ENCODE measurements at regions of chr5 and their contacts with region 1.

Region 1: DNA sequence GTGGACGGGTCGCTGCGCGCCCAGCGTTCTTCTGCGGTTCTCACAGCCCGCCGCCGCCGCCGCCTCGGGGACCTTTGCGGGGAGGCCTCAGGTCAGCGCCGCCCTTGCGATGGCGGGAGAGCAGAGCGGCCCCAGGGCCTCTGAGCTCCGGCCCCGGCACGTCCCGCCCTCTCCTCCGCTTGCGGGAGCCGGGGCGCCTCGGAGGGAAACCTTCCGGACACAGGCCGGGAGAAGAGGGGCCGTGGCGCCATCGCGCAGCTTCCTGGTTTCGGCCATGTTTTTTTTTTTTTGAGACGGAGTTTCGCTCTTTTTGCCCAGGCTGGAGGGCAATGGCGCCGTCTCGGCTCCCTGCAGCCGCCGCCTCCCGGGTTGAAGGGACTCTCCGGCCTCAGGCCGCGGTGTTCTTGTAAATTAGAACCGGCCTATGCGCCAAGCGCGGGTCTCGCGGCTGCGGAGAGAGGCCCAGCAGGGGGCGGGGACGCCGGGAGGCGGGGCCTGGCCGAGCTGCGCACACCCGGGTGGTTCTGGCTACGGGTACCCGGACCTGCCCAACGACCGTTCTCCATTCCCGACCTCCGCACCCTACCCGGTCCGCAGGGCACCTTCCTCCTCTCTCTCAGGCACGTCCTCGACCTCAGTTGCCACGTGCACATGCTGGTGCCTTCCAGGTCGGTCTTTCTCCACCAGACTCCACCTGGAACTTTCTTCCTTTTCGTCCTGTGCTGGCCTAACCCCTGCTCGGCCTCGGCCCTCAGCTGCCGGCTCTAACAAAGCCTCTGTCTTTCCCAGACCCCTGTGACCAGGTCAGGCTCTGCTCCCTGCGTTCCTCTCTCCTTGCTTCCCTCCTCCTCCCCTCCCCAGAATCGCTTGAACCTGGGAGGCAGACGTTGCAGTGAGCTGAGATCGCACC is 28.8 kb upstream of the MGAT1 start:
- DNase-seq: peak; percentile 67 to 81 (median 72)
- H3K4me3 ChIP-seq: peak overlapping the region; percentile 59 to 83
- H3K4me3 Mint-ChIP-seq: peak overlapping the region; percentile 94 to 99 (median 98)
- H3K27ac ChIP-seq: peak overlapping the region; percentile 94
- H3K27ac Mint-ChIP-seq: peak overlapping the region; percentile 97 to 99 (median 98)
- H3K4me1 ChIP-seq: peaks cover 51% of the 10 kb centered on the region
- H3K4me1 Mint-ChIP-seq: peaks cover 33 to 66% (median 50%) of the 10 kb centered on the region in 4 donors
- H3K27me3 ChIP-seq: no peaks in the 10 kb centered on the region
- H3K27me3 Mint-ChIP-seq: no peaks in the 10 kb centered on the region

Region 2: GRCh38 chr5:180796964-180797849 is 34.2 kb before region 1 on chr5:
- CTCF ChIA-PET with region 1: interaction called, 109 read pairs
- POLR2A ChIA-PET with region 1: interaction called, 236 read pairs
- intact Hi-C with region 1: loop called (anchors 1 kb)
- DNase-seq: no peak
- H3K4me3 ChIP-seq: no peak overlapping the region
- H3K4me3 Mint-ChIP-seq: peak overlapping the region in 7 of 8 donors; percentile 26 to 97 (median 65)
- H3K27ac ChIP-seq: no peak overlapping the region
- H3K27ac Mint-ChIP-seq: peak overlapping the region; percentile 48 to 91 (median 69)
- H3K4me1 ChIP-seq: peaks cover 83% of the 10 kb centered on the region
- H3K4me1 Mint-ChIP-seq: peaks cover 70 to 90% (median 81%) of the 10 kb centered on the region in 4 donors
- H3K27me3 ChIP-seq: no peaks in the 10 kb centered on the region
- H3K27me3 Mint-ChIP-seq: no peaks in the 10 kb centered on the region

Region 3: GRCh38 chr5:180810210-180810958 is 21.0 kb before region 1 on chr5:
- CTCF ChIA-PET with region 1: interaction called, 109 read pairs
- POLR2A ChIA-PET with region 1: interaction called, 271 read pairs
- intact Hi-C with region 1: loop called (anchors 1 kb)
- DNase-seq: peak; percentile 95 to 99 (median 98)
- H3K4me3 ChIP-seq: peak overlapping the region; percentile 60 to 95
- H3K4me3 Mint-ChIP-seq: peak overlapping the region; percentile 83 to 99 (median 90)
- H3K27ac ChIP-seq: peak overlapping the region; percentile 93
- H3K27ac Mint-ChIP-seq: peak overlapping the region; percentile 92 to 100 (median 99)
- H3K4me1 ChIP-seq: peaks cover 61% of the 10 kb centered on the region
- H3K4me1 Mint-ChIP-seq: peaks cover 53 to 87% (median 69%) of the 10 kb centered on the region in 4 donors
- H3K27me3 ChIP-seq: no peaks in the 10 kb centered on the region
- H3K27me3 Mint-ChIP-seq: no peaks in the 10 kb centered on the region

Region 4: DNA sequence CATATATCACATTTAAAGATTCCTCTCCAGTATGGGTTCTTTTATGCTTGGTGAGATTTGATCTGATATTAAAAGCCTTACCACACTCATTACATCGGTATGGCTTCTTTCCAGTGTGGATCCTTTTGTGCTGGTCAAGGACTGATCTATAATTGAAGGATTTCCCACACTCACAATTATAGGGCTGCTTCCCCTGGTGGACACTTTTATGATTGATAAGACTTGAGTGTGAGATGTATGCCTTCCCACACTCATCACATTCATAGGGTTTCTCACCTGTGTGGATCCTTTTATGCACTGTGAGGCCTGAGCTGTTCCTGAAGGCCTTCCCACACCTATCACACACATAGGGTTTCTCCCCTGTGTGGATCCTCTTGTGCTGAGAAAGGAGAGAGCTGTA is 17.5 kb after region 1 on chr5:
- CTCF ChIA-PET with region 1: interaction called, 3 read pairs
- POLR2A ChIA-PET with region 1: interaction called, 14 read pairs
- intact Hi-C with region 1: no loop called
- DNase-seq: no peak
- H3K4me3 ChIP-seq: no peak overlapping the region
- H3K4me3 Mint-ChIP-seq: no peak overlapping the region
- H3K27ac ChIP-seq: no peak overlapping the region
- H3K27ac Mint-ChIP-seq: no peak overlapping the region
- H3K4me1 ChIP-seq: no peaks in the 10 kb centered on the region
- H3K4me1 Mint-ChIP-seq: peaks cover 0 to 9% (median 5%) of the 10 kb centered on the region in 4 donors
- H3K27me3 ChIP-seq: no peaks in the 10 kb centered on the region
- H3K27me3 Mint-ChIP-seq: no peaks in the 10 kb centered on the region

Region 5: GRCh38 chr5:180868960-180869359 is 37.6 kb after region 1 on chr5:
- CTCF ChIA-PET with region 1: interaction called, 10 read pairs
- POLR2A ChIA-PET with region 1: interaction called, 8 read pairs
- intact Hi-C with region 1: no loop called
- DNase-seq: peak; percentile 32 to 64 (median 37)
- H3K4me3 ChIP-seq: no peak overlapping the region
- H3K4me3 Mint-ChIP-seq: no peak overlapping the region
- H3K27ac ChIP-seq: no peak overlapping the region
- H3K27ac Mint-ChIP-seq: no peak overlapping the region
- H3K4me1 ChIP-seq: peaks cover 4% of the 10 kb centered on the region
- H3K4me1 Mint-ChIP-seq: peaks cover 0 to 11% (median 5%) of the 10 kb centered on the region in 4 donors
- H3K27me3 ChIP-seq: no peaks in the 10 kb centered on the region
- H3K27me3 Mint-ChIP-seq: peaks cover 3 to 6% of the 10 kb centered on the region in 2 donors

Measured in CD4-positive, alpha-beta memory T cell (primary cell).